Ascending aorta (tissue), 2 donors: ENCODE measurements at regions of chr19 and their contacts with region 1.

Region 1: GRCh38 chr19:13262450-13262849 is 112.2 kb downstream of the IER2 start:
- DNase-seq: no peak
- H3K4me3 ChIP-seq: no peak overlapping the region
- H3K27ac ChIP-seq: no peak overlapping the region
- H3K4me1 ChIP-seq: no peaks in the 10 kb centered on the region
- H3K27me3 ChIP-seq: no peaks in the 10 kb centered on the region
- CTCF ChIP-seq: peak; percentile 57 to 66 (median 64)

Region 2: DNA sequence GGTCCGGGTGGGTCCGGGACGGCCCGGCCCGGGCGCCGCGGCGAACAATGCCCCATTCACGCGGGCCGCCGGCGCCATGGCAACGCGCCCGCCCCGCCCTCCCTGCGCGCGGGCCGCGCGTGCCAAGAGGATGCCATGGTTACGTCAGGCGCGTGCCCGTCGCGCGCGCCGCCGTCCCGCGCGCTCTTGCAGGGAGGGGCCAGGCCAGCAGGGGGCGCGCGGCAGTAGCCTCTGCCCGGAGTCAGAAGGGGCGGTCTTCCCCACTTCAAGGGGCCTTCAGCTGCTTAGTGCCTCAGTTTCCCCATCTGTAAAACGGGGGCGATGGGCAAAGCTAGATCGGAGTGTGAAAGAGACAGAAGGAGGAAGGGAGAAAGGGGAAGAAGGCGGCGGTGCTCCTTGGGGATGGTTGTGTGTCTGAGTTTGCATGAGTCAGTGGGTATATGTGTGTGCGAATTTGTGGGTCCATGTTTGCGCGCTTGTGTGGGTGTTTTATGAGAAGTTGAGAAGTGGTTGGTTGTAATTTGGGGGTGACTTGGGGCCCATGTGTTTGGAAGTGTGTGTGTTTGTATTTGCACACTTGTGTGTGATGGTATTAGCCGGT is 278.8 kb before region 1 on chr19:
- intact Hi-C with region 1: loop called (anchors 1 kb)
- DNase-seq: peak in 1 of 2 donors; percentile 91
- H3K4me3 ChIP-seq: peak overlapping the region; percentile 36 to 51
- H3K27ac ChIP-seq: no peak overlapping the region
- H3K4me1 ChIP-seq: peaks cover 0 to 5% of the 10 kb centered on the region in 2 donors
- H3K27me3 ChIP-seq: no peaks in the 10 kb centered on the region
- CTCF ChIP-seq: peak; percentile 86 to 99 (median 96)

Region 3: DNA sequence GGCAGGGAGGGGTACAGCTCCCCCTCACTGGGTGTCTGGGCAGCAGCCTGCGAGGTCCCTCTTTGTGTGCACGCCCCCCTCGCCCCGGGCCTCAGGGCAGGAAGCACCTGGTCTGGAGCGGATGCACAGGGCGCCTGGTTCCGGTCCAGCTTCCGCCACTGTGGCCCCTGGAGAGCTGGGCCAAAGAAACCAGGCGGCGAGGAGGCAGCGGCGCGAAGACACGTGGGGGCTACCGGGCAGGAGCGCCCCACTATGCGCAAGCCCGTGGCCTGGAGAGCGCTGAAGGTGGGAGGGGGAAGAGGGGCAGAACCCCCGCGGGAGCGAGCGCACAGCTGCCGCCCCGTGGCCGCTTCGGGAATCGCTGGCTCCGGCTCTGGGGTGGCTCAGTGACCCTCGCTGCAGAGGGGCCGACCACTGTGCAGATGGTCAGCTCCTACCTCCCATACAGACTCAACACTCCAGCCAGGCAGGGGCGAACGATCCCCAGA is 158.0 kb before region 1 on chr19:
- intact Hi-C with region 1: loop called (anchors 5 kb)
- DNase-seq: peak in 1 of 2 donors; percentile 82
- H3K4me3 ChIP-seq: peak overlapping the region in 1 of 2 donors; percentile 26
- H3K27ac ChIP-seq: peak overlapping the region; percentile 36 to 92
- H3K4me1 ChIP-seq: peaks cover 14 to 19% of the 10 kb centered on the region in 2 donors
- H3K27me3 ChIP-seq: no peaks in the 10 kb centered on the region
- CTCF ChIP-seq: peak; percentile 74 to 84 (median 79)

Region 4: GRCh38 chr19:13195678-13196077 is 66.8 kb before region 1 on chr19:
- intact Hi-C with region 1: loop called (anchors 1 kb)
- DNase-seq: no peak
- H3K4me3 ChIP-seq: no peak overlapping the region
- H3K27ac ChIP-seq: no peak overlapping the region
- H3K4me1 ChIP-seq: no peaks in the 10 kb centered on the region
- H3K27me3 ChIP-seq: no peaks in the 10 kb centered on the region
- CTCF ChIP-seq: no peak

Region 5: DNA sequence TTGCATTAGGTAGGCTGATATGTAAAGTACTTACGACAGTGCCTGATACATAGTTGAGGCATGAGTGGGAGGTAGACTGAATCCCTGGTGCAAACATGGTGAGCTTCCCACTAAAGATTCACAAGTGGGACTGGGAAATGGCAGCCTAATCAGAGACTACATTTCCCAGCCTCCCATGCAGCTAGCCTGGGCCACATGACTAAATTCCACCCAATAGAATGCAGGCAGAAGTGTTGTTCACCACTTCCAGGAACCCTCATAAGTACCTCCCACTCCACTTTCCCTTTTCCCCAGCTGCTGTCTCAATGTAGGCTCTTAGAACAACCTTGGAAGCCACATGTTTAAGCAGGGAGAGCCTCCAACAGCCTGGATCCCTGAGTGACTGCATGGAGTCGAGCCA is 138.9 kb after region 1 on chr19:
- intact Hi-C with region 1: no loop called
- DNase-seq: no peak
- H3K4me3 ChIP-seq: no peak overlapping the region
- H3K27ac ChIP-seq: no peak overlapping the region
- H3K4me1 ChIP-seq: no peaks in the 10 kb centered on the region
- H3K27me3 ChIP-seq: no peaks in the 10 kb centered on the region
- CTCF ChIP-seq: no peak